ENCODE measurements at regions of chr7 and their contacts with region 1.

Region 1: GRCh38 chr7:142385491-142386340 is 127.9 kb upstream of the PRSS58 start:
- DNase-seq: peak; percentile 84
- ATAC-seq: peak; percentile 60
- H3K4me3 ChIP-seq: peak overlapping the region; percentile 17; the same call in 1 of the 2 replicates
- H3K27ac ChIP-seq: peak overlapping the region; percentile 93
- H3K4me1 ChIP-seq: peaks cover 25% of the 10 kb centered on the region
- H3K27me3 ChIP-seq: no peaks in the 10 kb centered on the region
- CTCF ChIP-seq: peak; percentile 87

Region 2: GRCh38 chr7:142357953-142358520 is 27.7 kb before region 1 on chr7:
- CTCF ChIA-PET with region 1: interaction called, 11 read pairs
- POLR2A ChIA-PET with region 1: no interaction called
- intact Hi-C with region 1: loop called (anchors 2 kb)
- DNase-seq: peak; percentile 78
- ATAC-seq: peak; percentile 81
- H3K4me3 ChIP-seq: no peak overlapping the region
- H3K27ac ChIP-seq: no peak overlapping the region
- H3K4me1 ChIP-seq: peaks cover 22% of the 10 kb centered on the region
- H3K27me3 ChIP-seq: no peaks in the 10 kb centered on the region
- CTCF ChIP-seq: peak; percentile 85

Region 3: DNA sequence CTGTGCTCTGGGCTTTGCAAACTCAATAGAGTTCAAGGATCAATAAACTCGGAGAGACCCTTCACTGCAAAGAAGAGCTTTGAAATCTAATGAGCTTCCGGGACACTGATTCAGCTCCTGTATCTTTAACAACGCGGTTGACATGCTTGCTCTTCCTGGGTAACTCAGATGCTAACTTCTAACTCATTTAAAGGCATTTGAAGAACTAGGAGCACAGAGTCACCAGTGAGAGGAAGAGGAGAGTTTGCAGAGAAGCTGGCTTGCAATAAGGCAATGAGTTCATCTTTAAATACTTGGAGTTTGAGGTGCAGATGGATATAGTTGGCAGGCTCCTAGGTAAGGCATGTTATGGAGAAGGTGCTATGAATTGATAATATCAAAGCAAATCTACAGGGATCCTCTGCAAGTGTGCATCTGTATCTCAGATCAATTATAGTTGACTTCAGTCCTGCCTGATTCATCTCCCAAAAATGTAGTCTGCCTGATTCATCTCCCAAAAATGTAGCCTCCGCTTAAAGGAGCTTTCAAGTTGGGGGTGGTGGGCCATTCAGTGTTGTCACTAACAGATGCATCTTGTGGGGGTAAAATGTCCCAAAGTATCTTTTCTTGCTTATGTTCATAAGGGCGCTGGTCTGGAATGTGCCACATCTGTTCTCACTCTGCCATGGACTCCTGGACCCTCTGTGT is 54.6 kb after region 1 on chr7:
- CTCF ChIA-PET with region 1: no interaction called
- POLR2A ChIA-PET with region 1: no interaction called
- intact Hi-C with region 1: loop called (anchors 5 kb)
- DNase-seq: peak; percentile 95
- ATAC-seq: peak; percentile 54
- H3K4me3 ChIP-seq: peak overlapping the region; percentile 20; the same call in 1 of the 2 replicates
- H3K27ac ChIP-seq: peak overlapping the region; percentile 56
- H3K4me1 ChIP-seq: peaks cover 69% of the 10 kb centered on the region
- H3K27me3 ChIP-seq: no peaks in the 10 kb centered on the region
- CTCF ChIP-seq: no peak

Measured in PC-3 (cell line).